ENCODE measurements at regions of chr22 and their contacts with region 1.

Region 1: GRCh38 chr22:50169774-50170341 is 673 bp upstream of the PANX2 start:
- H3K4me3 Mint-ChIP-seq: peak overlapping the region; percentile 78
- H3K27ac Mint-ChIP-seq: peak overlapping the region; percentile 73
- H3K4me1 Mint-ChIP-seq: peaks cover 45% of the 10 kb centered on the region
- H3K27me3 Mint-ChIP-seq: peaks cover 35% of the 10 kb centered on the region

Region 2: GRCh38 chr22:50185384-50186087 is 15.7 kb after region 1 on chr22 and contains the start of gene TRABD:
- intact Hi-C with region 1: loop called (anchors 2 kb)
- H3K4me3 Mint-ChIP-seq: peak within 1 kb of the TSS; percentile 84
- H3K27ac Mint-ChIP-seq: peak within 1 kb of the TSS; percentile 76
- H3K4me1 Mint-ChIP-seq: peaks cover 55% of the 10 kb centered on the region
- H3K27me3 Mint-ChIP-seq: no peaks in the 10 kb centered on the region

Region 3: GRCh38 chr22:50209893-50210292 is 40.0 kb after region 1 on chr22:
- intact Hi-C with region 1: loop called (anchors 5 kb)
- H3K4me3 Mint-ChIP-seq: no peak overlapping the region
- H3K27ac Mint-ChIP-seq: no peak overlapping the region
- H3K4me1 Mint-ChIP-seq: peaks cover 41% of the 10 kb centered on the region
- H3K27me3 Mint-ChIP-seq: no peaks in the 10 kb centered on the region

Measured in dendritic cell treated with granulocyte-macrophage colony-stimulating factor and Interleukin-4, amounts not matched to agents 40 ng/mL and 50 ng/mL, for 4 days (primary cell).